ENCODE measurements at regions of chr11 and their contacts with region 1.

Region 1: GRCh38 chr11:57815476-57815875 is 53.9 kb downstream of the CTNND1 start:
- H3K4me3 Mint-ChIP-seq: no peak overlapping the region
- H3K27ac Mint-ChIP-seq: no peak overlapping the region
- H3K4me1 Mint-ChIP-seq: no peaks in the 10 kb centered on the region
- H3K27me3 Mint-ChIP-seq: no peaks in the 10 kb centered on the region

Region 2: DNA sequence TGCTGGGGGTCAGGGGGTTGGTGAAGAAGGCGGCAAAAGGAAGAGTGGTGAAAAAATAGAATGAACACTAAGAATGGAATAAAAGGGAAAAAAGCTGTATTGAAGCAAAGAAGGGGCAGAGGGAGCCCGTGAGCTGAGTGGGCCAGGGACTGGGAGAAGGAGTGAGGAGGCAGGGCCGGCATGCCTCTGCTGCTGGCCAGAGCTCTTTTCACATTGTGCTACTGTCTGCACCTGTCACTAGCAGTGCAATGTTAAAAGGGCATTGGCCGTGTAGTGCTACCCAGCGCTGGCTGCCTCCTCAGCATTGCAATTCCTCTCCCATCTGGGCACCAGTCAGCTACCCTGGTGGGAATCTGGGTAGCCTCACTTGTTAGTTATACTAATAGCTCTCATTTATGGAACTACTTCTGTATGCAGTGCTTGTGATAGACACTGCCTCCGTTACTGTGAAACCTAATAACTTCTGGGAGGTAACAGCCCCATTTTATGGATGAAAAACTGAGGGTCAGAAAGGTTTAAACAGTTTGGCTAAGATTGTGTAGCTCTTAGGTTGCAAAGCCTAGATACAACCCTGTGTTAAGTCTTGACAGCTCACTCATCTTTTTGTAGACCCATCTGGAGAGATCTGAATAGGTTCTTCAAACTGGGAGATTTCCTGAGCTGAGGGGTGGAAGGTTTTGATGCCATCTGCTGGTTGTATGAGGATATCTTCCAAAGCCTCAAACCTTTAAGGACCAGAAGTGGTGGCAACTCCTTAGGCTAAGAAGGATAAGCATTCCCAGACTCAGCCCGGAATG is 174.3 kb before region 1 on chr11:
- intact Hi-C with region 1: no loop called
- H3K4me3 Mint-ChIP-seq: no peak overlapping the region
- H3K27ac Mint-ChIP-seq: no peak overlapping the region
- H3K4me1 Mint-ChIP-seq: peaks cover 62% of the 10 kb centered on the region
- H3K27me3 Mint-ChIP-seq: peaks cover 52% of the 10 kb centered on the region

Region 3: DNA sequence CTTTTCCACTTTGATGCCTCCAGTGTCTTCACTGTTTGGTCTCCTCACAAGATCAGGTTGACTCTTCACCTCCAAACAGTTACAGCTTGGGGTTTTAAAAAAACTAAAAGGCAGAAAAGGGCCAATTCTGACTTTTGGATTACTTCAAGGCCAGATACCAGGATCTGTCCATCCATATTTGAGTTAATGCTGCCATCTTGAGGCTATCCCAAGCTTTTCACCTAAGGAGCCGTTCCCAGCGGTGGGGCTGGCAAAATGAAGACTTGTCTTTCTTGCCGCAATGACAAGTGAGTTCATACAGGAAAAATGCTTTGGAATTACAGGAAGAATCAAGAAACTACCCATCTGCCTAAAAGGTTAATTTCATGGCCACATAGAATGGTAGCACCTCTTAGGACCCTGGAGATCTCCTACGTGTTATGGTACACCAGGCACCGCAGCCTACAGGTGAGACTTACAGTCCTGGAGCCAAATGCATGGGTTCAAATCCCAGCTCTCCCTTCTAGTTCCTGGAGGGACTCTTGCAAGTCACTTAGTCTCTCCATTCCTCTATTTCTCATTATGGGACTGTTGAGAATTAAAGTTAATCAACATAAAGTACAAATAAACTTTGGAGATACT is 698.4 kb after region 1 on chr11:
- intact Hi-C with region 1: loop called (anchors 5 kb)
- H3K4me3 Mint-ChIP-seq: no peak overlapping the region
- H3K27ac Mint-ChIP-seq: no peak overlapping the region
- H3K4me1 Mint-ChIP-seq: no peaks in the 10 kb centered on the region
- H3K27me3 Mint-ChIP-seq: peaks cover 3% of the 10 kb centered on the region

Region 4: DNA sequence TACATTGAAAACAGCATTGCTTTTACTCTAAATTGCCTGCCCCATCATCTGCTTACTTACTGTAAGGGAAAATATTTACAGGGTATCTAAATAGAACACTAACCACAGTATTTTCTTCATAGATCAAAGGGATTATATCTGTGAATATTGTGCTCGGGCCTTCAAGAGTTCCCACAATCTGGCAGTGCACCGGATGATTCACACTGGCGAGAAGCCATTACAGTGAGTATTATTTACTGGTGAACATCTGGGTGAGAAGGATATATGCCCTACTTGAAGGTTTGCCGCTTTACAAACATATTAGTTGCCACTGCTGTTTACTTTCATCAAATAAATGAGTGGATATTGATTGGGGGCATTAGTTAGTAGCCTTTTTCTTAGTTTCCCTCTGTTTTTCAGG is 801.1 kb after region 1 on chr11:
- intact Hi-C with region 1: loop called (anchors 10 kb)
- H3K4me3 Mint-ChIP-seq: no peak overlapping the region
- H3K27ac Mint-ChIP-seq: no peak overlapping the region
- H3K4me1 Mint-ChIP-seq: peaks cover 1% of the 10 kb centered on the region
- H3K27me3 Mint-ChIP-seq: no peaks in the 10 kb centered on the region